Heart right ventricle (tissue), 16 donors: ENCODE measurements at regions of chr15 and their contacts with region 1.

Region 1: DNA sequence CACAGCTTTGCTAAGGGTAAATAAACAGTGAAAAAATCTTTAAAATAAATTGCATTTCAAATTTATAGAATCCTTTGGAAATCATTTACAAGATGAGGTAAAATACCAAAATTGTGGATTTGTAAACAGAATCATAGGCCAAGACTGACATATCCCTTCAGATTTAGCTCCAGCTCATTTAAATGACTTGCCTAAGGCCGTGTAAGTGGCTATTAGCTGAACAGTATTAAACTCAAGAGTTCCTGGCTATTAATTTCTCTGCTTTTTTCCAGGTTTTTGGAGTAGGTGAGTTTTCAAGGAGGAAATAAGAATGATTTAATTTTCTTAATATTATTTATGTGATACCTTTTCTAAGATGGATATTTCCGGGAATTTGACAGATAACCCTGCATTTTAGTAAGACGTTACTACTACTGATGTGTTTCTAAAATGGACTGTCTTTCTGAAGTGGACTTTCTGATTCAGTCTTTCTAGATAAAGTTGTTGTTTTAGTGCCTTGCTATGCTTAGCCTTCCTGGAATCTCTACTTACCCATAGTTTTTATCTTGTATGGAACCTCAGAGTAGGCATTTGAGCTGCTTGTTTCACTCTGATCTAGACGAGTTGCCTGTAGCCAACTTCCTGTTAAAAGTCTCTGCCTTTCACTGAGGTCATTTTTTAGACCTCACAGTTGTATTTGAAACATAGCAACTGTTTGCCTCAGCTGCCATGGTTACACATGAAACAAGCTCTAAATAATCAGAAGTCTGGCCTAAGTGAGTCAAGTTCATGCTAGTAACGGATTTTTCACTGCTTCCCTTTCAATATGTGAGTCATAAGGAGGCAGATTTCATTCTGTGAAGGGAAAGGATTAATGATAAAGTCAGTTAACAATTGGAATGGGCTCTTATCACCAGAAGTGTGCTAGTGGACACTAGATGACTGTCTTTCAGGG is 127.0 kb downstream of the KLHL25 start:
- DNase-seq: peak in 1 of 2 donors; percentile 83
- ATAC-seq: peak; percentile 74 to 97 (median 89)
- H3K4me3 ChIP-seq: no peak overlapping the region
- H3K27ac ChIP-seq: peak overlapping the region; percentile 4 to 91 (median 84)
- H3K4me1 ChIP-seq: peaks cover 9 to 64% (median 46%) of the 10 kb centered on the region in 9 donors
- H3K27me3 ChIP-seq: no peaks in the 10 kb centered on the region
- CTCF ChIP-seq: no peak

Region 2: GRCh38 chr15:85534031-85534430 is 133.7 kb before region 1 on chr15:
- intact Hi-C with region 1: no loop called
- DNase-seq: no peak
- ATAC-seq: peak in 5 of 8 donors; percentile 38 to 54 (median 46)
- H3K4me3 ChIP-seq: no peak overlapping the region
- H3K27ac ChIP-seq: peak overlapping the region in 3 of 10 donors; percentile 31 to 79 (median 49)
- H3K4me1 ChIP-seq: peaks cover 2 to 80% (median 56%) of the 10 kb centered on the region in 9 donors
- H3K27me3 ChIP-seq: no peaks in the 10 kb centered on the region
- CTCF ChIP-seq: no peak

Region 3: DNA sequence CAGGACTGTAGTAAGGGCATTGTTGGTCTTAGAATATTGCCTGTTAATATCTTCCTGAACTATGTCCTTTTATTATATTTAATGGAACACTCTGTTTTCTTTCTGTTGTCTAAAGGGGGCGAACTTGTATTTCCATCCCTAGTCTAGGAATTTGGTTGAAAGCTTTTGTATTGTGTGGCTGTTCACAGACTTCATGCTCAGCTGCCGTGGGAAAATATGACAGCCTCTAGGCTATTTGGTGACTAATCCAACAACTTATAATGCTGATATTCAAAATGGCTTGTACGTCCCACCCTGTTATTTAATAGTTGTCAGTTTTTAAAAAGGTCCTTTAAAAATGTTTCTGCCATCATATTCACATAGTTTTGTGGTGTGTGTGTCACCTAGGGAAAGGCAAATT is 75.6 kb before region 1 on chr15:
- intact Hi-C with region 1: loop called in 1 of 10 experiments (anchors 5 kb)
- DNase-seq: no peak
- ATAC-seq: peak in 7 of 8 donors; percentile 62 to 80 (median 68)
- H3K4me3 ChIP-seq: no peak overlapping the region
- H3K27ac ChIP-seq: peak overlapping the region in 9 of 10 donors; percentile 20 to 72 (median 59)
- H3K4me1 ChIP-seq: peaks cover 9 to 96% (median 80%) of the 10 kb centered on the region in 9 donors
- H3K27me3 ChIP-seq: no peaks in the 10 kb centered on the region
- CTCF ChIP-seq: peak in 7 of 9 donors; percentile 15 to 61 (median 39)

Region 4: DNA sequence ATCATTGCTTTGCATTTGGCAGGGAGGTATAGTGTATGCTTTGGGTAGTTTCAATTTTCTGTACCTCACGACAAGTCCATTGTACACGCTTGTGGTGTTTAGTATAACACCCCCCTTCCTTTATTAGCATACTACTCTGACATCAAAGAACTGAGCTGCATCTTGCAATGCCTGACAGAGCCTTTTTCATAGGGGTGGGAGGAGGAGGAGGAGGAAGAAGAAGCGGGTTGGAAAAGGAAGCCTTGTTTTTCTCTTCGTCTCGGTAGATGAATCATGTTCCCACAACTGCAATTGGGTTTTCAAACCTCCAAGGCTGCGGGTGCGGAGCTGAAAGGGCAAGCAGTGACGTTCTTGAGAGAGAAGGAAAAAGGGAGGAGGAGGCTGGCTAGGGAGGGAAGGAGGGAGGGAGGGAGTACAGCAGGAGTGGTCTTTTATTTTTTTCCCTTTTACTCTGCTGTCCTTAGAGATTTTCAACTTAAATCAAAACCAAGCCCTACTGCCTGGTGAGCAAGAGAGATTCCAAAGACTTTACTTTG is 48.7 kb before region 1 on chr15:
- intact Hi-C with region 1: loop called in 2 of 10 experiments (anchors 5 to 10 kb)
- DNase-seq: peak; percentile 59 to 86
- ATAC-seq: peak; percentile 65 to 84 (median 77)
- H3K4me3 ChIP-seq: peak overlapping the region; percentile 16 to 63 (median 53)
- H3K27ac ChIP-seq: peak overlapping the region; percentile 63 to 93 (median 83)
- H3K4me1 ChIP-seq: peaks cover 20 to 100% (median 98%) of the 10 kb centered on the region in 9 donors
- H3K27me3 ChIP-seq: no peaks in the 10 kb centered on the region
- CTCF ChIP-seq: no peak

Region 5: GRCh38 chr15:85625856-85626255 is 41.9 kb before region 1 on chr15:
- intact Hi-C with region 1: loop called in 2 of 10 experiments (anchors 5 kb)
- DNase-seq: no peak
- ATAC-seq: peak in 4 of 8 donors; percentile 28 to 39 (median 31)
- H3K4me3 ChIP-seq: no peak overlapping the region
- H3K27ac ChIP-seq: peak overlapping the region in 9 of 10 donors; percentile 8 to 93 (median 84)
- H3K4me1 ChIP-seq: peaks cover 21 to 98% (median 90%) of the 10 kb centered on the region in 9 donors
- H3K27me3 ChIP-seq: no peaks in the 10 kb centered on the region
- CTCF ChIP-seq: no peak

Region 6: GRCh38 chr15:85702321-85703101 is 34.8 kb after region 1 on chr15:
- intact Hi-C with region 1: loop called in 1 of 10 experiments (anchors 5 kb)
- DNase-seq: no peak
- ATAC-seq: peak in 3 of 8 donors; percentile 7 to 17 (median 14)
- H3K4me3 ChIP-seq: peak overlapping the region in 1 of 10 donors; percentile 22
- H3K27ac ChIP-seq: peak overlapping the region in 8 of 10 donors; percentile 81 to 91 (median 86)
- H3K4me1 ChIP-seq: peaks cover 29 to 76% (median 59%) of the 10 kb centered on the region in 9 donors
- H3K27me3 ChIP-seq: no peaks in the 10 kb centered on the region
- CTCF ChIP-seq: no peak

Region 7: GRCh38 chr15:85794603-85795336 is 127.0 kb after region 1 on chr15 and contains the start of gene KLHL25:
- intact Hi-C with region 1: no loop called
- DNase-seq: peak; percentile 94 to 95
- ATAC-seq: peak; percentile 96 to 98 (median 98)
- H3K4me3 ChIP-seq: peak within 1 kb of the TSS; percentile 73 to 98 (median 89)
- H3K27ac ChIP-seq: peak within 1 kb of the TSS; percentile 52 to 95 (median 90)
- H3K4me1 ChIP-seq: peaks cover 0 to 29% (median 24%) of the 10 kb centered on the region in 9 donors
- H3K27me3 ChIP-seq: peaks cover 0 to 9% (median 0%) of the 10 kb centered on the region in 7 donors
- CTCF ChIP-seq: no peak
- total RNA-seq, gene KLHL25: 1.9 to 4.6 (median 3.2) TPM